Transverse colon (tissue), 4 donors: ENCODE measurements at regions of chr2 and their contacts with region 1.

Region 1: DNA sequence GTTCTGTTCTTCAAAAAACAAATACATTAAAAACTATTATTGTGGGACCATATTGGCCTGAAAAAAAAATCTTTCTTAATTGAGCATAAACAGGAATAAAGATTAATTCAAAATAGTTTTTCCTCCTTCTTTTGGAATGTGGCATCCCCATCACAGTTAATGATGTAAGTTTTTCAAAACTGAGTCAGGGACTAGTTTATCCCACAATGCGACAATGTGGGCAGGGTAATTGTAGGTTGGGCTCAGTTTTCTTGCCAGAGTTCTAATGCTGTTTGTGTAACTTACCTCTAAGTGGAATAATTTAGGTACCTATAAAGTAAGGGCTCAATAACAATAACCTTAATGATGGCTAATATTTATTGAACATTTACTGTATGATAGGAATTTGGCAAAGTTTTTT is 82.0 kb downstream of the PMS1 start:
- DNase-seq: no peak
- H3K4me3 ChIP-seq: no peak overlapping the region
- H3K27ac ChIP-seq: no peak overlapping the region
- H3K4me1 ChIP-seq: no peaks in the 10 kb centered on the region
- H3K27me3 ChIP-seq: no peaks in the 10 kb centered on the region
- CTCF ChIP-seq: no peak
- EP300 ChIP-seq: no peak
- POLR2A ChIP-seq: no peak

Region 2: GRCh38 chr2:189729430-189729829 is 136.9 kb before region 1 on chr2:
- in situ Hi-C with region 1: no loop called
- intact Hi-C with region 1: loop called (anchors 5 kb)
- DNase-seq: no peak
- H3K4me3 ChIP-seq: no peak overlapping the region
- H3K27ac ChIP-seq: no peak overlapping the region
- H3K4me1 ChIP-seq: no peaks in the 10 kb centered on the region
- H3K27me3 ChIP-seq: no peaks in the 10 kb centered on the region
- CTCF ChIP-seq: no peak
- EP300 ChIP-seq: no peak
- POLR2A ChIP-seq: no peak

Region 3: GRCh38 chr2:190052307-190052706 is 186.0 kb after region 1 on chr2:
- in situ Hi-C with region 1: no loop called
- intact Hi-C with region 1: no loop called
- DNase-seq: no peak
- H3K4me3 ChIP-seq: no peak overlapping the region
- H3K27ac ChIP-seq: no peak overlapping the region
- H3K4me1 ChIP-seq: no peaks in the 10 kb centered on the region
- H3K27me3 ChIP-seq: no peaks in the 10 kb centered on the region
- CTCF ChIP-seq: no peak
- EP300 ChIP-seq: no peak
- POLR2A ChIP-seq: no peak